GM13976 (cell line): ENCODE measurements at regions of chr9 and their contacts with region 1.

Region 1: DNA sequence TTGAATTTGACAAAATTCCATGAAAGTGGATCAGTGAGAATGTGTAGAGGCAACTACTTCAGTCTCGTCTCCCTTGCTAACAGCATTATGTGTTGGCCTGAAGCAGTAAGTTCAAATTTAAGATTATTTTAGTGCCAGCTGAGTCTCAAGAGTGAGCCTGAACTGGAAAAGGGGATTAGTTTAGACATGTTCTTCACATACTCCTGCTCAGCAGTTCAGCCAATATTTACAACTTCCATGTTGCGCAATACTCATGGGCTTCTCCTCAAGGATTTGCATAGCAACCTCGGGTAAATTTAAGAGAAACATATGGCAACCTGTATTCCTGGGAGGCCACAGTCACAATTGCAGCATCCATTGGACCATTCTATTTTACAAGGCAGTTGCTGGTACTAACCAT is 553.8 kb downstream of the PTPRD start:
- DNase-seq: no peak
- CTCF ChIP-seq: no peak

Region 2: GRCh38 chr9:10268531-10269485 is 209.8 kb after region 1 on chr9:
- in situ Hi-C with region 1: loop called (anchors 25 kb)
- DNase-seq: peak; percentile 15
- CTCF ChIP-seq: no peak

Region 3: DNA sequence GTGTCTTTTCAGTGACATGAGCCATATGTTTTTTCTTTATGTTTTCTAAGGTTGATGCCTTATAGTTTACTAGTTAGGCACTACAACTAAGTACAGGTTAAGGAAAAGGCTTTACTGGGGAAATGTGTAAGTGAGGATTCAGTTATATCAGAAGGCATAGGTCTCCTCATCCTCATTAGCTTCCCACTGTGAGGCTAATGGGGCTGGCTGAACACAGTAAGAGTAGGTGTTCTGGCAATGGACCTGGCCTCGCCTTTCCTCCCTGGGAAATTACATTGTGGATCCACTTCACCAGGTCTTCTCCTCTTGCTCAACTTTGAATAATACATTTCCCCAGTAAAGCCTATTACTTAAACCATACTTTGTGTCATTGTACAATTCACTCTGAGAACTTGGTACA is 328.2 kb after region 1 on chr9:
- in situ Hi-C with region 1: no loop called
- DNase-seq: no peak
- CTCF ChIP-seq: no peak